Activated CD4-positive, alpha-beta T cell treated with anti-CD3 and anti-CD28 coated beads, Interleukin-2, amount 10 ng/mL, durations not matched to agents 24 days and 14 days (primary cell): ENCODE measurements at regions of chr15 and their contacts with region 1.

Region 1: GRCh38 chr15:81296673-81297072 is 27.3 kb downstream of the STARD5 start:
- DNase-seq: peak; percentile 94
- H3K4me3 Mint-ChIP-seq: peak overlapping the region; percentile 94
- H3K27ac Mint-ChIP-seq: peak overlapping the region; percentile 95
- H3K4me1 Mint-ChIP-seq: peaks cover 75% of the 10 kb centered on the region
- H3K27me3 Mint-ChIP-seq: no peaks in the 10 kb centered on the region

Region 2: DNA sequence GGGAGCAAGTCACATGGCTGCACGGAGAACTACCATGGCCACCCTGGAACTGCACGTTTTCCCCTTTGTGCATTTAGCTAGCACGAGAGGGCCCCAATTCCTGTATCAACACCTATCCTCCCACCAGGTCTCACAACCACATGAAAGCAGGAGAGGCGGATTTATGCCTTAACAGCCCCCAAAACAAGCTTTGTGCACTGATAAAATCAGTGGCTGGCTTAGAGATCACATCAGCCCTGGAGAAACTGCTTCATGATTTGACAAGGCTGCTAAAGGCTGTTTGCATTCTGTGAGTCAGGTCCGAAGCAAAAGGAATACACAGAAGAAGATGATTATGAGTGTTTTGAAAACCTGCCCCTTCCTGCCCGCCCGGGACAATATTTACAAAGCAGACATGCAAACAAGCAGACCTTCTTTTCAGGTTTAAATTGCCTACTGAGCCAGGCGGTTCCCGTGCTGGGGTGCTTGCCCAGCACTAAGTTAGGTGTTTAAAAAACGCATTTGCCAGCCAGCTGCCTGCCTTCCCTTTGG is 491.6 kb before region 1 on chr15:
- intact Hi-C with region 1: loop called (anchors 10 kb)
- DNase-seq: peak; percentile 63
- H3K4me3 Mint-ChIP-seq: peak overlapping the region; percentile 37
- H3K27ac Mint-ChIP-seq: peak overlapping the region; percentile 87
- H3K4me1 Mint-ChIP-seq: peaks cover 19% of the 10 kb centered on the region
- H3K27me3 Mint-ChIP-seq: peaks cover 6% of the 10 kb centered on the region

Region 3: GRCh38 chr15:81023483-81024264 is 273.0 kb before region 1 on chr15:
- intact Hi-C with region 1: loop called (anchors 2 kb)
- DNase-seq: peak; percentile 76
- H3K4me3 Mint-ChIP-seq: peak overlapping the region; percentile 66
- H3K27ac Mint-ChIP-seq: peak overlapping the region; percentile 96
- H3K4me1 Mint-ChIP-seq: peaks cover 27% of the 10 kb centered on the region
- H3K27me3 Mint-ChIP-seq: no peaks in the 10 kb centered on the region

Region 4: DNA sequence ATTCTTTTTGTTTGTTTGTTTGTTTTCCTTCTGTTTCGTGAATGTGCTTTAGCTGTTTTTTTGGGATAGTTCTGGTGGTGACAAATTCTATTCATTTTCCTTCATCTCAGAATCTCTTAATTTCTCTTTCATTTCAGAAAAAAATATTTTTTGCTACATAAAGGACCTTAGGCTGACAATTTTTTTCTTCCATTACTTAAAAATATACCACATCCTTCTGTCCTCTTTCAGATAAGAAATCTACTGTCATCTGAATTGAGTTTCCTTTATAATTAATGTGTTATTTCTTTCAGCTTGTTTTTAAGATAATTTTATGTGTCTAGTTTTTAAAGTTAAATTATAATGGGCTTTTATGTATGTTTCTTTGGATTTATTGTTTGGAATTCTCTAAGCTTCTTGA is 52.4 kb before region 1 on chr15:
- intact Hi-C with region 1: no loop called
- DNase-seq: no peak
- H3K4me3 Mint-ChIP-seq: no peak overlapping the region
- H3K27ac Mint-ChIP-seq: no peak overlapping the region
- H3K4me1 Mint-ChIP-seq: no peaks in the 10 kb centered on the region
- H3K27me3 Mint-ChIP-seq: peaks cover 25% of the 10 kb centered on the region

Region 5: DNA sequence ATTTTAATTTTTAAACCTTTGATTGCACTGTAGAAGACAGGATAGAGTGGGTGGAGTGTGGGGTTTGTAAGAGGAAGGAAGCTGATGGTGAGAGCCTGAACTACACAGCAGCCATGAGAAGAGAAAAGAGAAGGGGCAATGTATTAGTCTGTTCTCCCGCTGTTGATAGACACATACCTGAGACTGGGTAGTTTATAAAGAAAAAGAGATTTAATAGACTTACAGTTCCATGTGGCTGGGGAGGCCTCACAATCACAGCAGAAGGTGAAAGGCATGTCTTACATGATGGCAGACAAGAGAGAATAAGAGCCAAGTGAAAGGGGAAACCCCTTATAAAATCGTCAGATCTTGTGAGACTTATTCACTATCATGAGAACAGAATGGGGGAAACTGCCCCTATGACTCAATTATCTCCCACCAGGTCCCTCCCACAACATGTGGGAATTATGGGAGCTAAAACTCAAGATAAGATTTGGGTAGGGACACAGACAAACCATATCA is 10.0 kb before region 1 on chr15:
- intact Hi-C with region 1: loop called (anchors 1 kb)
- DNase-seq: peak; percentile 71
- H3K4me3 Mint-ChIP-seq: peak overlapping the region; percentile 71
- H3K27ac Mint-ChIP-seq: peak overlapping the region; percentile 85
- H3K4me1 Mint-ChIP-seq: peaks cover 62% of the 10 kb centered on the region
- H3K27me3 Mint-ChIP-seq: no peaks in the 10 kb centered on the region

Region 6: GRCh38 chr15:81334768-81335435 is 38.2 kb after region 1 on chr15:
- intact Hi-C with region 1: no loop called
- DNase-seq: no peak
- H3K4me3 Mint-ChIP-seq: no peak overlapping the region
- H3K27ac Mint-ChIP-seq: no peak overlapping the region
- H3K4me1 Mint-ChIP-seq: peaks cover 8% of the 10 kb centered on the region
- H3K27me3 Mint-ChIP-seq: no peaks in the 10 kb centered on the region

Region 7: DNA sequence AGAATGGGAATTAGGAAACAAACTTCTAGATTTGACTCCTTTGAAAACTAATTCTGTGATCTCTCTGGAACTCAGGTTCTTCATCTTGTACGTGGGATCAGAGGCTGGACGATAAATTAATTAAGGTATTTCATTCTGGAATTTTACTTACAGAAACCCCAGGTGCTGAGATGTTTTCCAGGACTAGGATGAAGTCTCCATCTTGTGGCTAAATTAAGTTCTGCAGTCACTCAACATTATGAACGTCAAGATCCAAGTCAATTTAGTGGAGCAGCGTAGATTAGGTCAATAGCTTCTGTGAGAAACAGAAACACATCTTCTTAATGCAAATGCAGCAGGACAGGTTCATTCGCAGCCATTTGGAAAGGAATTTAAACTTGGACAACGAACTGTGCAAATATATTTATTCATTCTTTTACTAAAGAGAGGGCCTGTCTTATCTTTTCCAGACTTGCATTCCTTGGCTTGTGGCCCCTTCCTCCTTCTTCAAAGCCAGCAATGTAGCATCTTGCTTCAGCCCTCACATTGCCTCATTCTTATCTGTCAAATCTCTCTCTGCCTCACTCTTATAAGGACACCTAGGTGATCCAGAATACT is 104.1 kb after region 1 on chr15:
- intact Hi-C with region 1: loop called (anchors 5 kb)
- DNase-seq: peak; percentile 77
- H3K4me3 Mint-ChIP-seq: no peak overlapping the region
- H3K27ac Mint-ChIP-seq: no peak overlapping the region
- H3K4me1 Mint-ChIP-seq: peaks cover 2% of the 10 kb centered on the region
- H3K27me3 Mint-ChIP-seq: peaks cover 16% of the 10 kb centered on the region